Keratinocyte (primary cell): ENCODE measurements at regions of chr2 and their contacts with region 1.

Region 1: GRCh38 chr2:236833501-236834073 is 252.1 kb upstream of the COPS8 start:
- DNase-seq: no peak
- H3K4me3 ChIP-seq: no peak overlapping the region
- H3K27ac ChIP-seq: no peak overlapping the region
- H3K4me1 ChIP-seq: peaks cover 6% of the 10 kb centered on the region
- H3K27me3 ChIP-seq: no peaks in the 10 kb centered on the region
- CTCF ChIP-seq: no peak

Region 2: DNA sequence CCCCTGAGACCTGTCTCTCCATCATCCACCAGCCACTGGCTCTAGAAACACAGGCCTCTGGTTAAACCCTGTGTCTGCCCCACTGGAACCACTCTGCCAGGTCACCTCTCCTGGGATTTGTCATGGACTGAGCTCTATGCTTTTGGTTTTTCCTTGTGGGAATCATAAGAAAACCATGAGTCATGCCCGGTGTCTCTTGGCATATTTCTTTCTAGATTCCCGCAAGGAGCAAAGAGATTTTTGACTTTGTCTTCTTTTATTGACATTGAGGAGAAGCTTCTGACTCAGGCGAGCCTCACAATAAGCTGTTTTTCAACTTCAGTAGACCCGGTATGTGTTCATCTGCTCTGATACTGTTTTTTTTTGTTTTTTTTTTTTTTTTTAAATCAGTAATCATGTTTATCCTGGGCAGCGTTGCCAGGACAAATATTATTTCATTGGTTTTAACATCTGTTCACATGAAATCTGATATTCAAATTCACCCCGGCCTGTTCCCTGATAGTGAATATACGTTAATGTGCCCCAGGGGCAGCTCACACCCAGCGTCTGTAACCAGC is 56.8 kb before region 1 on chr2:
- dilution Hi-C with region 1: loop called (anchors 5 kb)
- DNase-seq: peak; percentile 64
- H3K4me3 ChIP-seq: no peak overlapping the region
- H3K27ac ChIP-seq: peak overlapping the region; percentile 78
- H3K4me1 ChIP-seq: peaks cover 18% of the 10 kb centered on the region
- H3K27me3 ChIP-seq: no peaks in the 10 kb centered on the region
- CTCF ChIP-seq: no peak